ENCODE measurements at regions of chr7 and their contacts with region 1.

Region 1: GRCh38 chr7:32586291-32587221 is 91.3 kb downstream of the AVL9 start:
- DNase-seq: no peak

Region 2: DNA sequence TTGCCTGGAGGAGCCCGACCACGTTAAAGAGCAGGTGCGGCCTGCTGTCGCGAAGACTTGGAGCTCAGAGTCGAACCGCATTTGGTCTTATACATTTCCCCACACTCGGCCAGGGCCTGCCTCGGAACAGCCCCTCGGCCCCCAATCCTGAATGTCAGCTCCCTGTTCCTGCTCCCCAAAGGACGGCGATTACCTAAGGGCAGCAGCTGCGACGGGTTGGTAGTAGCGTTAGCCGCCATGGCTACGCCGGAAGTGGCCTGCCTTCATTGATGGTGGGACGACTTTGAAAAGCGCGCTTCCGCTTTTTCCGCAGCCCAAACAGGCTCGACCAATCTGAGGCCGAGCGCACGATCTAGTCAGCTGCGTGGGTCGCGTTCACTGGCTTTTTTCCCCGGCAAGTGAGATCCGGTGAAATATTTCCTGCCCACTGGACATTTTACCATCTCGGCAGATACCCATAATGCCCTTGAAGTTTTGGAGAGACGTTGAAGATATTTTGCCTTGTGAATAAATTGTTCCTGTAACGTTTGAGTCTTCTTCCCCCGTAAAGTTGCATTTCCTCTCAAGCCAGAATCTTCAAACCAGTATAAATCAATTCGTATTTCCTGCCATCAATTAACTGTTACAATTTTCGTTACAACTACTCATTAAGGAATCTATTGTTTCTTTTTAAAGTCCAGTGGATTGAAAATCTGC is 96.3 kb before region 1 on chr7 and contains the start of gene LSM5:
- intact Hi-C with region 1: loop called (anchors 2 kb)
- DNase-seq: peak; percentile 96
- total RNA-seq, gene LSM5: 31.1 TPM